ENCODE measurements at regions of chr1 and their contacts with region 1.

Region 1: GRCh38 chr1:207676153-207676552 is 31.2 kb downstream of the CR1L start:
- DNase-seq: no peak
- H3K4me3 ChIP-seq: no peak overlapping the region
- H3K27ac ChIP-seq: no peak overlapping the region
- H3K4me1 ChIP-seq: no peaks in the 10 kb centered on the region
- H3K27me3 ChIP-seq: peaks cover 0 to 10% of the 10 kb centered on the region in 2 donors
- CTCF ChIP-seq: no peak
- POLR2A ChIP-seq: no peak

Region 2: GRCh38 chr1:207077470-207078377 is 598.4 kb before region 1 on chr1:
- intact Hi-C with region 1: loop called (anchors 5 kb)
- DNase-seq: peak in 1 of 2 donors; percentile 67
- H3K4me3 ChIP-seq: no peak overlapping the region
- H3K27ac ChIP-seq: no peak overlapping the region
- H3K4me1 ChIP-seq: peaks cover 0 to 4% of the 10 kb centered on the region in 2 donors
- H3K27me3 ChIP-seq: no peaks in the 10 kb centered on the region
- CTCF ChIP-seq: peak; percentile 68 to 90 (median 88)
- POLR2A ChIP-seq: no peak

Region 3: GRCh38 chr1:207612762-207613161 is 63.4 kb before region 1 on chr1:
- intact Hi-C with region 1: no loop called
- DNase-seq: no peak
- H3K4me3 ChIP-seq: no peak overlapping the region
- H3K27ac ChIP-seq: no peak overlapping the region
- H3K4me1 ChIP-seq: no peaks in the 10 kb centered on the region
- H3K27me3 ChIP-seq: no peaks in the 10 kb centered on the region
- CTCF ChIP-seq: no peak
- POLR2A ChIP-seq: no peak

Region 4: DNA sequence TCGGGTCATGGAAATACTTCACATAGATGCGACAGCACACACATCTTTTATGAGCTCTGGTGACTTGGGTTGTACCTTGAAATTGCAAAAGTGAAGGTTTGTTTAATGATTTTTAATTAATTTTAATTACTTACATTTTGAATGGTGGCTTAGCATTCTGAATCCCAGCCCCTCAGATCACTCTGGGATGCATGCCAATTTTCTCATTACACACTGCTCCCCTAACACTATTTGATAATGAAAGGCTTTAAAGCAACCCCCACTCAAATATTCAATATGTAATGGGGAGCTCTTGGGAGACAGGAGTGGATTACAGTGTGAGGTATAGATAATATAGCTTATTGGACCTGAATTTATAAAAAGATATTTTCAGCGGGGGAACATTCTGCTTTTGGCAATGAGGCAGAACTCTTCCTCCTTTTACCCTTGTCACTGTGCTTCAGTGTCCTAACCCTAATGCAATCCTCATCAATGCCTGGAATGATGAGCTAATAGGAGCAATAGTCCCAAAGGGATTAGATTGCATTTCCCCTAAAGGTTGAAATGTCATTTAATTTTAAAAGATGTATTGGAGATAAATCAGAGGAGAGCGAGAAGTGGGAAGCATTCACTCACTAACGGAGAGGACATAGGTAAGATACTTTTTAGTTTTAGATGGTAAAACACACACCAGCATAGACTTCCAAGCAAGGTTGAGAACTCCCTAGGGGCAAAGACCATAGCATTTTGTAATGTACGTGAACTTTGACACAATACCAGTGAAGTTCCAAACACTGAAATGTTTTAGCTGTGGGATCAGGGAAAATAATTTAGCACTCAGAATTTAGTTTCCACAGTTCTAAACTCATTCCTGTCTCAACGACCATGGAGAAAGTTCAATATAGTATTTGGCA is 952.1 kb after region 1 on chr1:
- intact Hi-C with region 1: no loop called
- DNase-seq: no peak
- H3K4me3 ChIP-seq: no peak overlapping the region
- H3K27ac ChIP-seq: no peak overlapping the region
- H3K4me1 ChIP-seq: no peaks in the 10 kb centered on the region
- H3K27me3 ChIP-seq: no peaks in the 10 kb centered on the region
- CTCF ChIP-seq: no peak
- POLR2A ChIP-seq: no peak